Activated CD4-positive, alpha-beta T cell treated with anti-CD3 and anti-CD28 coated beads for 36 hours (primary cell): ENCODE measurements at regions of chr20 and their contacts with region 1.

Region 1: GRCh38 chr20:10696650-10697049 is 22.9 kb upstream of the JAG1 start:
- DNase-seq: peak; percentile 50
- ATAC-seq: no peak
- H3K4me3 Mint-ChIP-seq: no peak overlapping the region
- H3K27ac Mint-ChIP-seq: no peak overlapping the region
- H3K4me1 Mint-ChIP-seq: no peaks in the 10 kb centered on the region
- H3K27me3 Mint-ChIP-seq: peaks cover 15% of the 10 kb centered on the region

Region 2: DNA sequence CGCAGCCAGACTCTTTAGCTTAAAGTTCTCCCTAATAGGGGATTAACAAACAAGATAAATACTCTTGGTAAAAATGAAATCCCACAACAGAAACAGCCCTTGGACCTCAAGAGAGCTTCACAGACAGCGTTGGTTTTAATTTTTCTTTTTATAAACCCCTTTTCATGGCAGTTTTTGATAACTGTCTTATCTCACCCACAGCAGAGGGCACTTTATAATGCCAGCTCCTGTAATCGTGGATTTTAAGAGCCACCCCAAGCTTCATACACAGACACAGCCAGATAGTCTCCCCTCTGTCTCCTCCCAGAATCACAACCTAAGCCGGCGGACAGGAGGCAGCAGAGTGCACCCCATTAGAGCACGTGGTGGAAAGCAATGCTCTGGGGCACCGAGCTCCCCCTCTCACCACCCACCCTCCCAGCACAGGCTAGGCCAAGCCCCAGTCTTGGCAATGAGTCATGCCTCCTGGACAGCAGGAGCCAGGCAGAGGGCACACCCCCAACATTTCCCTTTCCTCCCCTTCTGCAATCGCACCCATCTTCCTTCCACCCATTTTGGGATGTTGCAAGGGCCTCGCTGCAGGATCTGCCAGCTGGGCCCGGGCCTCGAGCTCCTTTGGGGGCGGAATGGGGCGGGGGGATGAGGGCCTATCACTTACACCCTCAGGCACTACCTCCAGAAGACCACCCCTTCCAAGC is 25.3 kb before region 1 on chr20:
- CTCF ChIA-PET with region 1: no interaction called
- POLR2A ChIA-PET with region 1: no interaction called
- intact Hi-C with region 1: no loop called
- DNase-seq: peak; percentile 71
- ATAC-seq: peak; percentile 40
- H3K4me3 Mint-ChIP-seq: no peak overlapping the region
- H3K27ac Mint-ChIP-seq: no peak overlapping the region
- H3K4me1 Mint-ChIP-seq: peaks cover 21% of the 10 kb centered on the region
- H3K27me3 Mint-ChIP-seq: peaks cover 54% of the 10 kb centered on the region

Region 3: DNA sequence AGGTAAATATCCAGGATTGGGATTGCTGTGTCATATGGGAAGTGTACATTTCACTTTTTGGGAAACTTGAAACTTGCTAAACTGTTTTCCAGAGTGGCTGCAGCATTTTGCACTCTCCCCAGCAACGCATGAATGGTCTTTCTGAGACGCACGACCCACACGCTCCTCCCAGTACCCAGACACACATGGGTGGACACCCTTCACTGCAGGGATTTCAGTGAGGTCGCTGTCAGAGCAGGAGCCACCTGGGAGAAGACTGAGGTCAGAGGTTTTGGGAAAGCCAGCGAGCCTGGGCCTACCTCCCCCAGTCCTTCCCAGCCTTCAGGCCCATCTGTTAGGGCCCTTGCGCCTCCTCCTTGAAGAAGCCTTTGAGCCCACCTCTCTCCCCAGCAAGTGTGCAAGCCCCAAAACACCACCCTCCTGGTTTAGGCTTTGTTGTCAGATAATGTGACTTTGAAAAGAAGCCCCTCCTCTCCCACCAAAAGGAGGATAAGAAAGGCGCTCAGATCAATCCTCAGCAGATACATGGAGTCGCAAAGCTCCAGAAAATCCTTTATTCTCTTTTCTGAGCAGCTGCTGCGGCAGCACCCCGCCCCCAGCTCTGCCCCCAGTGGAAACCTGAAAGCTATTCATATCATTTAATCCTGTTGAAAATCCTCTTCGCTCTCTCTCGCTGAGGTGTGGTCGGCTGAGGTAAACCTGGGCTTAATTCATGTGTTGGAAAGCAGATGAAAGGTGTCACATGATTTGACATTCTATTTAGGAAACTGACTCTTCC is 10.1 kb before region 1 on chr20:
- CTCF ChIA-PET with region 1: interaction called, 12 read pairs
- POLR2A ChIA-PET with region 1: no interaction called
- intact Hi-C with region 1: no loop called
- DNase-seq: no peak
- ATAC-seq: no peak
- H3K4me3 Mint-ChIP-seq: no peak overlapping the region
- H3K27ac Mint-ChIP-seq: no peak overlapping the region
- H3K4me1 Mint-ChIP-seq: no peaks in the 10 kb centered on the region
- H3K27me3 Mint-ChIP-seq: peaks cover 15% of the 10 kb centered on the region

Region 4: GRCh38 chr20:10783707-10784578 is 87.3 kb after region 1 on chr20:
- CTCF ChIA-PET with region 1: no interaction called
- POLR2A ChIA-PET with region 1: no interaction called
- intact Hi-C with region 1: no loop called
- DNase-seq: no peak
- ATAC-seq: no peak
- H3K4me3 Mint-ChIP-seq: no peak overlapping the region
- H3K27ac Mint-ChIP-seq: no peak overlapping the region
- H3K4me1 Mint-ChIP-seq: no peaks in the 10 kb centered on the region
- H3K27me3 Mint-ChIP-seq: peaks cover 15% of the 10 kb centered on the region